HEK293 (cell line): ENCODE measurements at regions of chr3 and their contacts with region 1.

Region 1: GRCh38 chr3:14113965-14114635 is 10.6 kb downstream of the CHCHD4 start:
- H3K4me3 ChIP-seq: no peak overlapping the region
- H3K27ac ChIP-seq: no peak overlapping the region
- H3K4me1 ChIP-seq: no peaks in the 10 kb centered on the region
- CTCF ChIP-seq: no peak

Region 2: GRCh38 chr3:13895155-13896105 is 218.7 kb before region 1 on chr3:
- CTCF ChIA-PET with region 1: interaction called, 16 read pairs
- POLR2A ChIA-PET with region 1: no interaction called
- H3K4me3 ChIP-seq: peak overlapping the region; percentile 37
- H3K27ac ChIP-seq: no peak overlapping the region
- H3K4me1 ChIP-seq: no peaks in the 10 kb centered on the region
- CTCF ChIP-seq: no peak

Region 3: DNA sequence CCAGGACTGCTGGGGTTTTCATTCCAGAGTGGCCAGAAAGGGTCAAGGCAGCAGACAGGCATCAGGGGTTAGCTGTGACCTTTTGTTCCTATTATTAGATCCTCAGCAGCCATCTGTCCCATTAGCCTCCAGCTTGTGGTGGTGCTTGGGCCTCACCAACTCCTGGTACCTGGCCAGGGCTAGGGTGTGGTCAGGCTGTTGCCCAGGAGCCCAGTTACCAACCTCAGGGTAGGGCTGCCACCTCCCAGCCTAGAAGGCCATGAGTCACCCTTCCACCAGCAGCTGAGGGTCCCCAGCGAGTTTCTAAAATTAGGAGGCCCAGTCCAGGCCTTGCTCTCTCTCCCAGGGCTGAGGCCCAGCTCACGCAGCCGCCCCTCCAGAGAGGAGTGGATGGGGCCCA is 22.9 kb after region 1 on chr3:
- CTCF ChIA-PET with region 1: no interaction called
- POLR2A ChIA-PET with region 1: no interaction called
- H3K4me3 ChIP-seq: no peak overlapping the region
- H3K27ac ChIP-seq: no peak overlapping the region
- H3K4me1 ChIP-seq: no peaks in the 10 kb centered on the region
- CTCF ChIP-seq: no peak